Right cardiac atrium (tissue), 5 donors: ENCODE measurements at regions of chr4 and their contacts with region 1.

Region 1: DNA sequence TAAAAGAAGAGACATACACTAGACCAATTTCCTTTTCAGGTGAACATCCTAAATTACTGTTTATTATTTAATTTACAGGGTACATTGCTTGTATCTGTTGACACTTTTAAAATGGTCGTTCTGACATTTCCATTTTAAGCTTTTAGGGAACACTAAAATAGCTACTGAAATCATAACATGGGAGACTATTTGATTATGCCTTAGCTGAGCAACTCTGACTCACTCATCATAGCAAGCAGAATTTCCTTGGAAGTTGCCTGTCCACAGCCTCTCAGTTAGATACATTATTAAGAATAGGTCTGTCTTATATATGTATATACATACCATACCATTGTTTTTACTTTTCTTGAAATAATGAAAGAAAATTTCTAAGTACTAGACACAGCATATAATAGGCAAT is 22.0 kb downstream of the GUCY1B1 start:
- DNase-seq: no peak
- ATAC-seq: no peak
- H3K4me3 ChIP-seq: no peak overlapping the region
- H3K27ac ChIP-seq: no peak overlapping the region
- H3K4me1 ChIP-seq: no peaks in the 10 kb centered on the region
- H3K27me3 ChIP-seq: no peaks in the 10 kb centered on the region

Region 2: GRCh38 chr4:155442267-155443105 is 338.3 kb before region 1 on chr4:
- intact Hi-C with region 1: loop called in 3 of 4 experiments (anchors 5 to 10 kb)
- DNase-seq: peak; percentile 81 to 93 (median 92)
- ATAC-seq: peak; percentile 91 to 94
- H3K4me3 ChIP-seq: peak overlapping the region; percentile 21
- H3K27ac ChIP-seq: no peak overlapping the region
- H3K4me1 ChIP-seq: no peaks in the 10 kb centered on the region
- H3K27me3 ChIP-seq: no peaks in the 10 kb centered on the region

Region 3: GRCh38 chr4:156195914-156196313 is 415.1 kb after region 1 on chr4:
- intact Hi-C with region 1: no loop called
- DNase-seq: no peak
- ATAC-seq: no peak
- H3K4me3 ChIP-seq: no peak overlapping the region
- H3K27ac ChIP-seq: no peak overlapping the region
- H3K4me1 ChIP-seq: no peaks in the 10 kb centered on the region
- H3K27me3 ChIP-seq: no peaks in the 10 kb centered on the region